Cardiac septum (tissue), 1 donor: ENCODE measurements at regions of chr11 and their contacts with region 1.

Region 1: DNA sequence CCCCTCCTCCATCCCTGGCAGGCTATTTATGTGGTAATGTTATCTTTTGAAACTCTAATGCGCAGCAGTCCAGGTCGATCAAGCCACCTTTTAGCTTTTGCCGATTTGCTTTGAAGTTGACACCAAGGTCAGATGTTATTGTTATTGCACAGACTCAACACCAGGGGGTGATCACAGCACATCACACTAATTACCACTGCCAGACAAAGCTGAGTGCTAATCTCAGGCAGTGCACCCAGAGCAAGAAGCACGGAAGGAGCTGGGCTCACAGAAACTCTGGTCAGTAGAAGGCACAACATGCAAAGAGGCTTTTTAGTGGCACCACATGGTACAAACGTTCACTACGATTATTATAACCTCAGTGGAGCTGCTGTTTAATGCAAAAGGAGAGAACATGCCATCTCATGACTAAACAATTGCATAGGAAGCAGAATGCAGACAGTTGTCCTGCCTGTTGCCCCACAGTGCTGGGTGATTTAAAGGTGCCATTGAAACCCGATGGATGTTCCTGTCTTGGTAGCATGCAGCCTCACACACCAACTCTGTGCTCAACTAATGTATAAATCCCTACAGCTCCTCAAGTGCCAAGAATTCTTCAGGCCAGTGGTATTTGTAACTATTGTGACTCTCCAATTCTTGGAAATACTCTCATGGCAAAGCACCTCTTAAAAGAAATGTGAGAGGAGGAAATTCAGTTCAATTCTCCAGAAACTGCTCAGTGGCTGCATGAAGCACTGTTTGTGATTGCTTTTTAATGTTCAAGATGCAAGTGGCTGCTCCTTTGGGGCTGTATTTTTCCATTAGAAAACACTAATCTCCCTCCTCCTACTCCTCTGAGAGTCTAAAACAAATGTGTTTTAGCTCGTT is 353.9 kb upstream of the DDI1 start:
- DNase-seq: no peak

Region 2: DNA sequence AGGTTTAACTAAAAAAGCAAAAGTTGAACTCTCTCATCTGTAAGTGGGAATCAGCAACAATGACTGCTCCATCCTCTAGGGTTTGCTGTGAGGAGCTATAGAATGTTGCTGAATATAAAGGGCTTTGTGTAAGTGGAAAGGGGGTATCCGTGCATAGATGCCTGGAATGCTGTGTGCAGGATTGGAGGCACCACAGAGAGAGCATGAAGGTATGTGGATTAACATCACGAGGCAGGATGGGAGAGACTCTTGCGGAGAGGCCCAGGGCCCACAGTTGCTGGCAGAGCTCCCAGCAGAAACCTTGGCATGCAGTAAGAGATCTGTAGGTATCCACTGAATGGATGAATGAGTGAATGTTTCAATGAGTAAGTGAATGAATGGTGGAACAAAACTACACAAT is 55.2 kb after region 1 on chr11:
- intact Hi-C with region 1: loop called (anchors 5 kb)
- DNase-seq: no peak

Region 3: DNA sequence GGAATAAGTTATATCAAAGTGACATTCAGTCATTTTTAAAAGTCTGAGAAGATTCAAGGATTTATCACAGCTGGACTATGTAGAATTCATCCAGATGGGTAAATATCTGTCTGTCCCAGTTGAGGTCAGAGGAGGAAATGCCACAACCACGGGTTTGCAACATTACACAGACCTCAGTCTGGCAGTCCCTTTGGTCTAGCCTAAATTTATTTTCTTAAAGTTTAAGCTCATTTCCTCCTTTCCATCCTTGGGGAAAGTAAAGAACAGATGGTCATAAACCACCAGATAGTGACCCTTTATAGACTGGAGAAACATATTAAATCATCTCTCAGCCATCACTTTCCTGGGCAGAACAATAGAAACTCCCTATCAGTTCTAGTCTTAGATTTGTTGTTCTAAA is 115.5 kb after region 1 on chr11:
- intact Hi-C with region 1: loop called (anchors 5 kb)
- DNase-seq: no peak

Region 4: GRCh38 chr11:103927535-103927934 is 245.0 kb after region 1 on chr11:
- intact Hi-C with region 1: loop called (anchors 10 kb)
- DNase-seq: no peak

Region 5: DNA sequence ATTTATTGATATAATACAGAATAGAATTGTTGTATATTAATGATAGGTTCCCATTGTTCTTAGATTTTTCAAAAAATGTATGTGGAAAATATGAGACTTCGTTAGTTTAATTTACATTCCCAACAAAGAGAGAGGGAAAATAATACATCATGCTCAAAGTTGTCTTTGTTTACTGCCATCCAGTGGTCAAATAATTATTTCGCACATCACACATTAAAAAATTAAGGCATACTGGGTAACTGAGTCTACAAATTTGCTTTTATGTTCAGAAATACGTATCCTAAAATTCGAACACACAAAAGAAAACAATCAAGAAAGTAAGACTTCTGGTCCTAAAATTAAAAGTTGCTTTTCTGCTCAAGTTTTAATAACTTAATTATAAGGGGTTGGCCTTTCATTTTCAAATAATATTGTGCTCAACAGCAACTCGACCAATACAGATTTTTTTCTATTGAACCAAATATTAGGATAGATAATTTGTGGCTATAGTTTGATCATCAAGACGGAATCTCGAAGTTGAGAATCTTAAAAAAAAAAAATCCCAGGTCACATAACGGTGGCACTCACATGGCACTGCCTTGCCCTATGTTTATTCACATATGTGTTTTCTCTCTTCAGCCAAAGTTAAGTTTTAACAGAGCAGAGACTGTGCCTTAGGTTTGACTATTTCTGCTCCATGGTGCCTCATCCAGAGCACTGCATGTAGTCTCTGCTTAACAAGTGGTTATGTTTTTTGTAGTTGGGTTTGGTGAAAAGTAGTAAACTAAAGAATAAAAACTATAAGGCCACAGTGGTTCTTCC is 469.1 kb after region 1 on chr11:
- intact Hi-C with region 1: loop called (anchors 2 kb)
- DNase-seq: no peak